AG04450 (cell line): ENCODE measurements at regions of chr20 and their contacts with region 1.

Region 1: GRCh38 chr20:9912858-9913434 is 74.1 kb upstream of the PAK5 start:
- DNase-seq: peak; percentile 3
- H3K4me3 ChIP-seq: no peak overlapping the region
- H3K27ac ChIP-seq: no peak overlapping the region
- H3K27me3 ChIP-seq: no peaks in the 10 kb centered on the region
- CTCF ChIP-seq: peak; percentile 86

Region 2: DNA sequence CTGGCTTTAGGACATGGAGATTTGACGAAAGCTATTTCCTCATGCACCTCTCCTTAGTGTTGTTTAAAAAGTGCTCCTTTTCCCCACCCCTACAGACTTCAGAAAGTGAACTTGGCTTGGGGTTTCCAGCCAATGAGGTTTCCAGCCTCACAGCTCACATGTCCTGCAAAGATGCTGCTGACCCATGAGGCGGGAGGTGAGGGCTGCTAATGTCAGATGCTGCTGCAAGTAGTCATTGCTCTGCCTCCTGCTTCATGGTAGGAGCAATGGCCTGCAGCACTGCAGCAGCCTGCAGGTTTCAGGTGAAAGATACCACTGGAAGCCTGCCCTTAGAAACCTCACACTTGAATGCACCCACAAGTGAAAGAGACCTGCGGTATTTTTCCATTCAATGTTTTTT is 285.7 kb before region 1 on chr20:
- CTCF ChIA-PET with region 1: interaction called, 11 read pairs
- POLR2A ChIA-PET with region 1: no interaction called
- DNase-seq: no peak
- H3K4me3 ChIP-seq: no peak overlapping the region
- H3K27ac ChIP-seq: no peak overlapping the region
- H3K27me3 ChIP-seq: peaks cover 3% of the 10 kb centered on the region
- CTCF ChIP-seq: no peak

Region 3: DNA sequence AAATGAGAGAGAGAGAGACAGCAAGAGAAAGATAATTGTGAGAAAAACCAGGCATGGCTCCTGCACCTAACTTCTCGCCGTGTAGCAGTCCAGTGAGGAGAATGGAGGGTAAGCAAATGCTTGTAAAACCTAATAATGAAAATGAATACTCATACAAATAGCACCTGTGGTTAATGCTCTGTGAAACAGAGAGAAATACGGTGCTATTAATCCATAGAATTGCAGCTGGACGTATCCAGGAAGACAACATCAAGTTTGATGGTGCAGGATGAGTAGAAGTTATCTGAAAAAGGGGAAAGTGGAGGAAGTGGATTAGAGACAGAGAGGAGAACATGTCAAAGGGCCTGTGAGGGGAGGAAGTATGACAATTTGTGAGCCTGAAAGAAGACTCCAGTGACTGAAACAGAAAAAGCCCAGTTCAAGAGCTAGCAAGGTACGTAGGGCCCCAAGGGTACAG is 15.4 kb after region 1 on chr20:
- CTCF ChIA-PET with region 1: interaction called, 14 read pairs
- POLR2A ChIA-PET with region 1: no interaction called
- DNase-seq: no peak
- H3K4me3 ChIP-seq: no peak overlapping the region
- H3K27ac ChIP-seq: no peak overlapping the region
- H3K27me3 ChIP-seq: no peaks in the 10 kb centered on the region
- CTCF ChIP-seq: no peak

Region 4: GRCh38 chr20:9949563-9949962 is 36.6 kb after region 1 on chr20:
- CTCF ChIA-PET with region 1: interaction called, 12 read pairs
- POLR2A ChIA-PET with region 1: no interaction called
- DNase-seq: no peak
- H3K4me3 ChIP-seq: no peak overlapping the region
- H3K27ac ChIP-seq: no peak overlapping the region
- H3K27me3 ChIP-seq: no peaks in the 10 kb centered on the region
- CTCF ChIP-seq: no peak